ENCODE measurements at regions of chr13 and their contacts with region 1.

Region 1: GRCh38 chr13:52128714-52129700 is at the start of gene NEK5:
- DNase-seq: peak; percentile 73
- H3K4me3 ChIP-seq: peak within 1 kb of the TSS; percentile 77
- H3K27ac ChIP-seq: no peak within 1 kb of the TSS
- H3K4me1 ChIP-seq: no peaks in the 10 kb centered on the region
- H3K27me3 ChIP-seq: no peaks in the 10 kb centered on the region
- CTCF ChIP-seq: peak; percentile 62
- total RNA-seq, gene NEK5: 0.24 to 0.25 TPM

Region 2: DNA sequence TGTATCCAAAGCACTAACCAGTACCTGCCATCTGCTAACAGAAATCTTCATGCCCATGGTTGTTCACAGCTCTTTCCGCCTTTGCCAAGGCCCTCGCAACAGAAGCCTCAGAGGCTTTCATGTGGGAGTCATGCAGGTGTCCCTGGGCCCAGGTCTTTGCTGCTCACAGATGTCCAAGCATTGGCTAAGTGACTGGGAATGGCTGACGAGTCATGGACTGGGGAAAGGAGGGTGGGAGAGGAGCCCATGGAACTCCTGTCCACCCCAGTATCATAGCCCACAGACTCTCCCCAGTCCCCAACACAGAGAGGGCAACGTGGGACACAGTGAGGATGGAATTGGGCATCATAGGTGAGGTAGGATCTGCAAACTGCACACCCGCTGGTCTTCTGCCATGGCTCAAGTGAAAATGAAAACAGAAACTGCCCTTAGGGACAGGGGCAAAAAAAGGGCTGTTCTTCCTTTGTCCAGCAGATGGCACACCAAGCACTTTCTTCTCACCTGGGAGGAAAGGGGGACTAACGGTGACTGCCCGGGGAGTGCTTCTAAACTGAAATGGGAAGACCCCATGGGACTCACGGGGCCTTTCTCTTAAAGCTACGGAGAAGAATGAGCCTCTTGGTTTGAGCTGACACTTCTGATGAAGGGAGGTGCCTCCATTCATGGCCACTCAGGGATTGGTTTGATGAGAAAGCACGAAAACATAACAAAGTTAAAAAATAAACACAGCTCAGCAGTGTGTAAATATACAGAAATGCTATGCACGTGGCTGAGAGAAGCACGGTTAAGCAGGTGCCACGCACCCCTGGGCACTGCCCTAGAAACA is 314.0 kb before region 1 on chr13:
- intact Hi-C with region 1: loop called (anchors 5 kb)
- DNase-seq: peak; percentile 79
- H3K4me3 ChIP-seq: no peak overlapping the region
- H3K27ac ChIP-seq: no peak overlapping the region
- H3K4me1 ChIP-seq: no peaks in the 10 kb centered on the region
- H3K27me3 ChIP-seq: no peaks in the 10 kb centered on the region
- CTCF ChIP-seq: peak; percentile 76

Region 3: GRCh38 chr13:51895906-51896888 is 232.8 kb before region 1 on chr13:
- intact Hi-C with region 1: loop called (anchors 2 kb)
- DNase-seq: peak; percentile 60
- H3K4me3 ChIP-seq: no peak overlapping the region
- H3K27ac ChIP-seq: no peak overlapping the region
- H3K4me1 ChIP-seq: no peaks in the 10 kb centered on the region
- H3K27me3 ChIP-seq: no peaks in the 10 kb centered on the region
- CTCF ChIP-seq: peak; percentile 46

Region 4: DNA sequence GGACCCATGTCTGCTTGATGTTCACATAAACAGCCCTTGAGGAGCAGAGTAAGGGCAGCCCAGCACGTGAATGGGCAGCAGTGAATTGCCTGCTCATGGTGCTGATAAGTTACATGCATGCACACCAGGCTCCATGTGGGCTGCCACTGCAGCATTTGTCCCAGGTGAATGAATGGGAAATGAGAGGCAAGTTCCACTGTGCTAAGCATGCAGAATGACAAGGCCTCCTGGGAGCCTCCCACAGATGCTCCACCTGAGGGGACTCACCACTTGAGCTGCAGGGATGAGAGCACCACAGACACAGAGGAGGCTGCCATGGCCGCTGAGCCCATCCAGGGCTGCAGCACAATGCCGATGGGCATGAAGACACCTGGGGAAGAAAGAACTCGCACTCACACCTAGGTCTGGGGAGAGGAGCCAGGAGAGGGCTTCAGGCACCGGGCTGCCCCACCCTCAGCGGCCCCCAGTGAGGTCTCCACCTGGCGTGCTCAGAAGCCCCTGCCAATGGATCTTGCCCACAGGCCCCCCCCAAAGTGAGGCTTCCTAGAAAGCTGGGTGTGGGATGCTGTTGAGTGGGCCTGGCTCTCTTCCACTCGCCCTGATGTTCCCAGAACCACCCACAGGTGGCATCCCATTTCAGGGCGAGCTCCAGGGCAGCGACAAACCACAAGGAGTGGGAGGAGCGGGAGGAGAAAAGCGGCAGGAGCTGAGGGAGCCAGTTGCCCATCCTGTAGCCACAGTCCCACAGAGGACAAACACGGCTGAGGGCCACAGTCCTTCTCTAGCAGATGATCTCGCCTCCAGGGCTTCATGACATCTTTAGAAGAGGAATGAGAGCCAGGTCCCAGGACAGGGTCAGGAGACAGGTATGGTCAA is 193.4 kb before region 1 on chr13:
- intact Hi-C with region 1: loop called (anchors 5 kb)
- DNase-seq: peak; percentile 52
- H3K4me3 ChIP-seq: no peak overlapping the region
- H3K27ac ChIP-seq: no peak overlapping the region
- H3K4me1 ChIP-seq: no peaks in the 10 kb centered on the region
- H3K27me3 ChIP-seq: no peaks in the 10 kb centered on the region
- CTCF ChIP-seq: peak; percentile 43

Region 5: DNA sequence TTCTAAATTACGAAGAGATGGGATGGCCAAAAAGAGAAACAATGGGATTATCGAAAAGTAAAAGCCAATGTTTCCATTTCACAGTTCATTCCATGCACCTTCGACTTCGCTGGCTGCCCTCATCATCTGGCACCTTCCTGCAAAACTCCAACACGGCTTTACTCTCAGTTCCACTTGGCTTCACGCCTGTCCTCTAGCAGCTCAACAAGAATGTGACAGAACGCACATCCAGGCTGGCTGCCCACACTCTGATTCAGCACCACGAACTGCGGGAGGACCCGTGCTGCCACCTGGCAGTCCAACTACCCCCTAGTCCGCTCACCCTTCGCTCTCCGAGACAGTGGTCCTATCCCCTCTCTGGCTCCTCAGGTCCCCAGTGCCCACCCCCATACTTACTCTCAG is 129.5 kb before region 1 on chr13:
- intact Hi-C with region 1: loop called (anchors 2 kb)
- DNase-seq: no peak
- H3K4me3 ChIP-seq: no peak overlapping the region
- H3K27ac ChIP-seq: no peak overlapping the region
- H3K4me1 ChIP-seq: peaks cover 15% of the 10 kb centered on the region
- H3K27me3 ChIP-seq: no peaks in the 10 kb centered on the region
- CTCF ChIP-seq: no peak

Region 6: GRCh38 chr13:52179925-52180324 is 50.9 kb after region 1 on chr13:
- intact Hi-C with region 1: no loop called
- DNase-seq: no peak
- H3K4me3 ChIP-seq: no peak overlapping the region
- H3K27ac ChIP-seq: no peak overlapping the region
- H3K4me1 ChIP-seq: peaks cover 4% of the 10 kb centered on the region
- H3K27me3 ChIP-seq: no peaks in the 10 kb centered on the region
- CTCF ChIP-seq: no peak

Region 7: DNA sequence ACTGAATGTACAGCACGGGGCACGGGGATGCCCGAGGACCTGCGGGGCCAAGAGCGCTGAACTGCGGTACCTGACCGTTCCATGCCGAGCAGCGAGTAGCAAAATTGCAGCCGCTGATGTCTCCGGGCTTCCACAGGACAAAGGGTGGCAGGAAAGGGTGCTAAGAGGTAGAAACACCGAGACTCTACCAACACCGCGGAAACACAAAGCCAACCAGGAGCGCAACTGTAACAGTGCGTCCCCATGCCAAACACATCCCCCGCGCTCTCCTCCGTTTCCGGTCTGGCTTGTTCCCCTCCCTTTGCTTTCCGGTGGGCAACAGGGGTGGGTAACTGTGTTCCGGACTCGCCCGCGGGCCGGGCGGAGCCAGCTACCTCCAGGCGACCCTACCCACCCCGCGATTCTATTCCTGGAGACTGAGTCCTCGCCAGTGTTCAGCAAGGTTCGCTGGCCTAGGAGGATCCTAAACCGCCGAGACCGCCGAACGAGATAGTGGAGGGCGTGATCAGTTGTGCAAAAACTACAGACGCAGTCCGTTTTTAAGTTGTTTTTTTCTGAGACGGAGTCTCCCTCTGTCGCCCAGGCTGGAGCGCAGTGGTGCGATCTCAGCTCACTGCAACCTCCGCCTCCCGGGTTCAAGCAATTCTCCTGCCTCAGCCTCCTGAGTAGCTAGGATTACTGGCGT is 65.3 kb after region 1 on chr13:
- intact Hi-C with region 1: loop called (anchors 10 kb)
- DNase-seq: peak; percentile 91
- H3K4me3 ChIP-seq: peak overlapping the region; percentile 52
- H3K27ac ChIP-seq: peak overlapping the region; percentile 74
- H3K4me1 ChIP-seq: no peaks in the 10 kb centered on the region
- H3K27me3 ChIP-seq: no peaks in the 10 kb centered on the region
- CTCF ChIP-seq: no peak

Measured in colonic mucosa (tissue), 4 donors.